K562 (cell line): ENCODE measurements at regions of chr22 and their contacts with region 1.

Region 1: GRCh38 chr22:21712894-21713712 is 22.5 kb downstream of the YPEL1 start:
- DNase-seq: peak; percentile 99
- ATAC-seq: peak; percentile 96
- H3K4me3 ChIP-seq: peak overlapping the region; percentile 5; the same call in 1 of the 2 replicates
- H3K27ac ChIP-seq: no peak overlapping the region; the same call in 2 of the 3 replicates
- H3K4me1 ChIP-seq: peaks cover 9 to 14% of the 10 kb centered on the region in 2 experiments; a peak in 4 of 5 replicates
- H3K27me3 ChIP-seq: peaks cover 41 to 71% of the 10 kb centered on the region in 2 experiments
- CTCF ChIP-seq: peak in 1 of 3 experiments; percentile 98; a peak in 2 of 6 replicates
- EP300 ChIP-seq: peak; percentile 64
- POLR2A ChIP-seq: no peak
- RAD21 ChIP-seq: no peak

Region 2: DNA sequence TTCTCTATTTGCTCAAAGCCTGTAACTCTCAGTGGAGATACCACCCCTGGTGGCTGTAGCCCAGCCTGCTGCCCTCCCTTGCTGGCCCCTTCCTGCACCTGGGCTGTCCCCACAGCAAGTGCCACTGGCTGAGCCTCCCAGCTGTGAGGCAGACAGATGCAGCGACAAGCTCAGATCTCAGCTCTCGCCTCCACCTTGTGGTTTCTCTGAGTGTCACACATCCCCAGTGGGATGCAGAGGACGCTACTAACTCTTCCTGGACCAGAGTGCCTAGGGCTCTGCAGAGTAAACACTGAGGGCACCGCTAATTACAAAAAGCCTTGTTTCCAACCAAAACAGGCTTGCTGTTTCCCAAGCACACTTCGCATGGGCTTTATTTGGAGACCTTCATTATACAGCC is 13.5 kb after region 1 on chr22:
- CTCF ChIA-PET with region 1: interaction called, 27 read pairs
- POLR2A ChIA-PET with region 1: interaction called, 53 read pairs
- in situ Hi-C with region 1: no loop called
- intact Hi-C with region 1: loop called (anchors 2 kb)
- DNase-seq: peak; percentile 77 to 94 (median 86)
- ATAC-seq: peak; percentile 98
- H3K4me3 ChIP-seq: no peak overlapping the region
- H3K27ac ChIP-seq: no peak overlapping the region
- H3K4me1 ChIP-seq: peaks cover 0 to 13% of the 10 kb centered on the region in 2 experiments; a peak in 2 of 5 replicates
- H3K27me3 ChIP-seq: peaks cover 37 to 84% of the 10 kb centered on the region in 2 experiments
- CTCF ChIP-seq: peak in 2 of 3 experiments; percentile 99; a peak in 4 of 6 replicates
- EP300 ChIP-seq: no peak
- POLR2A ChIP-seq: no peak
- RAD21 ChIP-seq: peak in 1 of 2 experiments; percentile 97; a peak in 2 of 4 replicates

Region 3: GRCh38 chr22:21791635-21792625 is 78.8 kb after region 1 on chr22:
- CTCF ChIA-PET with region 1: interaction called, 17 read pairs
- POLR2A ChIA-PET with region 1: no interaction called
- in situ Hi-C with region 1: no loop called
- intact Hi-C with region 1: loop called (anchors 5 kb)
- DNase-seq: peak; percentile 90 to 99 (median 95)
- ATAC-seq: peak; percentile 86
- H3K4me3 ChIP-seq: no peak overlapping the region
- H3K27ac ChIP-seq: peak overlapping the region; percentile 10; the same call in 2 of the 3 replicates
- H3K4me1 ChIP-seq: peaks cover 0 to 11% of the 10 kb centered on the region in 2 experiments; a peak in 3 of 5 replicates
- H3K27me3 ChIP-seq: no peaks in the 10 kb centered on the region
- CTCF ChIP-seq: peak in 1 of 3 experiments; percentile 83; a peak in 2 of 6 replicates
- EP300 ChIP-seq: peak; percentile 99
- POLR2A ChIP-seq: no peak
- RAD21 ChIP-seq: no peak

Region 4: DNA sequence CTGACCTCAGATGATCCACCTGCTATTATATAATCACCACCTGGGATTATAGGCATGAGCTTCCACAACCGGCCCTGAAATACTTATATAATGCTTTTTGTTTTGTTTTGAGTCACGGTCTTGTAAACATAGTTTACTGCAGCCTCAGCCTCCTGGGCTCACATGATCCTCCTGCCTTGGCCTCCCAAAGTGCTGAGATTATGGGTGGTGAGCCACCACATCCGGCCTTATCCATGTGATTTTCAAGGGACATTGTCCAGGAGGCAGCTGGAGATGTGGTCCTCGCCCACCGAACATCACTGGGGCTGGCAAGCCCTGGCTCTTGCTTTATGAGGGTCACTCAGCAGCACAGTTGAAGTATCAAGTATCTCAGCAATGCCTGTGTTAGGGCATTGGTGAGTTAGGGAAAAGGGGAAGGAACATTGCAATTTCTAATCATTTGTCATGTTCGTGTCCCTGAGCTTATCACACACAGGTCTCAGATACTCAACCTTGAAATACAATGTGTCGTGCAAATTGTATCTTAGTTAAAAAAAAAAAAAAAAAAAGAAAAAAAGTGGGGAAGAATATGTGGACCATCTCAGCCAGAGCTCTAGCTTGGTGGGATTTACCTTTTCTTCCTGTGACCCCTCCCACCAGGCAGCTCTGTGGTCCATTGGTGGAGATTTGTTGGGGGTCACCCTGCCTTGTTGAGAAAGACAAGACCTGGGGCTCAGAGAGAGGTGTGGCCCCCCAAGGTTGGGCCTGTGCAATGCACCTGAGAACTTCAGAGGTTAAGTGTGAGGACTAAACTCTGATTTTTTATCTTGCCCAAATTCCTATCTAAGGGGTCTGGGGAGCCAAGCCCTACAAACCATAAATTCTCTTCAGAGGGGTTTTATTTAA is 194.8 kb after region 1 on chr22:
- CTCF ChIA-PET with region 1: interaction called, 25 read pairs
- POLR2A ChIA-PET with region 1: interaction called, 3 read pairs
- in situ Hi-C with region 1: no loop called
- intact Hi-C with region 1: no loop called
- DNase-seq: peak in 2 of 4 experiments; percentile 49 to 57
- ATAC-seq: no peak
- H3K4me3 ChIP-seq: no peak overlapping the region
- H3K27ac ChIP-seq: no peak overlapping the region
- H3K4me1 ChIP-seq: peaks cover 0 to 16% of the 10 kb centered on the region in 2 experiments; a peak in 4 of 5 replicates
- H3K27me3 ChIP-seq: peaks cover 7 to 14% of the 10 kb centered on the region in 2 experiments; a peak in 4 of 5 replicates
- CTCF ChIP-seq: 0 out of 6 replicates have a peak, but pooled peaks of 1 of the 3 experiments have one; percentile 8
- EP300 ChIP-seq: no peak
- POLR2A ChIP-seq: no peak
- RAD21 ChIP-seq: no peak

Region 5: GRCh38 chr22:21952586-21953571 is 239.8 kb after region 1 on chr22 and contains the start of gene PPM1F:
- CTCF ChIA-PET with region 1: interaction called, 114 read pairs
- POLR2A ChIA-PET with region 1: interaction called, 12 read pairs
- in situ Hi-C with region 1: loop called (anchors 5 kb)
- intact Hi-C with region 1: loop called (anchors 2 kb)
- DNase-seq: peak; percentile 100
- ATAC-seq: peak; percentile 84
- H3K4me3 ChIP-seq: peak within 1 kb of the TSS; percentile 66
- H3K27ac ChIP-seq: peak within 1 kb of the TSS; percentile 68
- H3K4me1 ChIP-seq: peaks cover 25 to 39% of the 10 kb centered on the region in 2 experiments
- H3K27me3 ChIP-seq: no peaks in the 10 kb centered on the region
- CTCF ChIP-seq: peak; percentile 99 to 100 (median 100)
- EP300 ChIP-seq: peak; percentile 72
- POLR2A ChIP-seq: no peak
- RAD21 ChIP-seq: no peak
- polyA plus RNA-seq, gene PPM1F: 2.1 to 4.5 TPM

Region 6: GRCh38 chr22:22103078-22103875 is 390.2 kb after region 1 on chr22:
- CTCF ChIA-PET with region 1: no interaction called
- POLR2A ChIA-PET with region 1: no interaction called
- in situ Hi-C with region 1: no loop called
- intact Hi-C with region 1: loop called (anchors 5 kb)
- DNase-seq: peak; percentile 86 to 97 (median 93)
- ATAC-seq: peak; percentile 87
- H3K4me3 ChIP-seq: no peak overlapping the region
- H3K27ac ChIP-seq: no peak overlapping the region
- H3K4me1 ChIP-seq: peaks cover 0 to 2% of the 10 kb centered on the region in 2 experiments; a peak in 2 of 5 replicates
- H3K27me3 ChIP-seq: peaks cover 21 to 37% of the 10 kb centered on the region in 2 experiments
- CTCF ChIP-seq: no peak
- EP300 ChIP-seq: no peak
- POLR2A ChIP-seq: no peak
- RAD21 ChIP-seq: no peak

Region 7: DNA sequence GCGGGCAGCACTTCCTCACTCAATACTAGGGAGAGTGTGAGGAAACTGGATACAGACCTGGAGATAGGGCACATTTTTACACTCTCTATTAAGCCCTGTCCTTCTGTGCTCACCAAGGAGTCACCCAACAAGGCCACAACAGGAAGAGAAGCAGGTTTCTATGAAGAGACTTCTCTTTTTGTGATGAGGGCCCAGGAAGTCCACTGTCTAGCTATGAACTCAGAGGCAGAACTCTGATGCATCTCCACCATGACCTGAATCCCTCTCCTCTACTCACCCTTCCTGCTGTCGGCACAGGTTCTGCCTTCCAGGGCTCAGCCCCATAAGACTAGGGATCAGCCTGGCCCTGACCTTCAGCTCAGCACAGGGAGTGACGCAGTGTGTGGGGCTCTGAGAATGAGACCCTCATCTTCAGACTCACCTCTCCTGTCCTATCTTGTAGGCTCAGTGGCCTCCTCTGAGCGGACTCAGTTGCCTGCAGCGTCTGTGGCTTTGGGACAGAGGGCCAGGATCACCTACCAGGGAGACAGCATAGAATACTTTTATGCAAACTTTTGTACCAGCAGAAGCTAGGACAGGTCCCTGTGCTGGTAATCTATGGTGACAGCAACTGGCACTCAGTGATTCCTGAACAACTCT is 1125.2 kb after region 1 on chr22:
- CTCF ChIA-PET with region 1: no interaction called
- POLR2A ChIA-PET with region 1: no interaction called
- in situ Hi-C with region 1: no loop called
- intact Hi-C with region 1: no loop called
- DNase-seq: peak in 1 of 4 experiments; percentile 38
- ATAC-seq: peak; percentile 30
- H3K4me3 ChIP-seq: no peak overlapping the region
- H3K27ac ChIP-seq: no peak overlapping the region
- H3K4me1 ChIP-seq: peaks cover 0 to 7% of the 10 kb centered on the region in 2 experiments; a peak in 1 of 5 replicates
- H3K27me3 ChIP-seq: peaks cover 22 to 33% of the 10 kb centered on the region in 2 experiments
- CTCF ChIP-seq: no peak
- EP300 ChIP-seq: no peak
- POLR2A ChIP-seq: no peak
- RAD21 ChIP-seq: no peak